IMR-90 (cell line): ENCODE measurements at regions of chr1 and their contacts with region 1.

Region 1: DNA sequence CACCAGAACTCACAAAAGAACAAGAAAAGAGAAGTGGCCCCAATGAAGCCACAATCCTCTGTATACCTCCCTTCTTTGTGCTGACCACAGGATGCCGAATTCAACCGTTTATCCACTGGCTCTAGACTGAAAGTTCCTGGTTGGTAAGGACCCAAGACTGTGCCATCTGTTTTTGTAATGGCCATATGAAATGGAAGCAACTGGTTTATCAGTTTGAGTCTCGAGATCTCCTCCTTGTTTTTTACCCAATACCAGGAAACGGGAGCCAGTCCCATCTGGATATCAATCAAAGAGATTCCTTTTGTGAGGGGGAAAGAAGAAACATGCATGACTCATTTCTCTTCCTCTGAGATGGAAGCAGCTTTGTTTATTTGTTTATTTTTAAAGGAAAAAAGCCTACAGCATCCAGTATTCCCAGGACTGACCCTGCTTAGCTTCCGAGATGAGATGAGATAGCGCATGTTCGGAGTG is 32.4 kb upstream of the ZNF124 start:
- DNase-seq: no peak
- ATAC-seq: no peak
- H3K4me3 ChIP-seq: no peak overlapping the region
- H3K27ac ChIP-seq: no peak overlapping the region
- H3K4me1 ChIP-seq: peaks cover under 1% of the 10 kb centered on the region
- H3K27me3 ChIP-seq: no peaks in the 10 kb centered on the region
- CTCF ChIP-seq: no peak
- POLR2A ChIP-seq: no peak
- RAD21 ChIP-seq: no peak

Region 2: DNA sequence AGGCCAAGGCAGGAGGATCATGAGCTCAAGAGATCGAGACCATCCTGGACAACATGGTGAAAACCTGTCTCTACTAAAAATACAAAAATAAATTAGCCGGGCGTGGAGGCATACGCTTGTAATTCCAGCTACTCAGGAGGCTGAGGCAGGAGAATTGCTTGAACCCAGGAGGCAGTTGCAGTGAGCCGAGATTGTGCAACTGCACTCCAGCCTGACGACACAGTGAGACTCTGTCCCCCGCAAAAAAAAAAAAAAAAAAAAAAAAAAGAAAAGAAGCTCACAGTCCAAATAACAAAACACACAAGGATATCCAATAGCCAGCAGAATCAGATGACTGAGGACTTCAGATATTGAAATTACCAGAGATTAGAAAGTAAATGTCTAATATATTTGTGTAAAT is 284.3 kb before region 1 on chr1:
- CTCF ChIA-PET with region 1: no interaction called
- POLR2A ChIA-PET with region 1: no interaction called
- dilution Hi-C with region 1: no loop called
- in situ Hi-C with region 1: no loop called
- intact Hi-C with region 1: loop called (anchors 5 kb)
- DNase-seq: no peak
- ATAC-seq: no peak
- H3K4me3 ChIP-seq: no peak overlapping the region
- H3K27ac ChIP-seq: no peak overlapping the region
- H3K4me1 ChIP-seq: peaks cover 6% of the 10 kb centered on the region; the same call in 1 of the 2 replicates
- H3K27me3 ChIP-seq: no peaks in the 10 kb centered on the region
- CTCF ChIP-seq: no peak
- POLR2A ChIP-seq: no peak
- RAD21 ChIP-seq: no peak

Region 3: GRCh38 chr1:246959944-246960693 is 244.1 kb before region 1 on chr1:
- CTCF ChIA-PET with region 1: no interaction called
- POLR2A ChIA-PET with region 1: no interaction called
- dilution Hi-C with region 1: no loop called
- in situ Hi-C with region 1: no loop called
- intact Hi-C with region 1: no loop called
- DNase-seq: no peak
- ATAC-seq: no peak
- H3K4me3 ChIP-seq: no peak overlapping the region
- H3K27ac ChIP-seq: no peak overlapping the region
- H3K4me1 ChIP-seq: no peaks in the 10 kb centered on the region
- H3K27me3 ChIP-seq: no peaks in the 10 kb centered on the region
- CTCF ChIP-seq: no peak
- POLR2A ChIP-seq: no peak
- RAD21 ChIP-seq: no peak

Region 4: DNA sequence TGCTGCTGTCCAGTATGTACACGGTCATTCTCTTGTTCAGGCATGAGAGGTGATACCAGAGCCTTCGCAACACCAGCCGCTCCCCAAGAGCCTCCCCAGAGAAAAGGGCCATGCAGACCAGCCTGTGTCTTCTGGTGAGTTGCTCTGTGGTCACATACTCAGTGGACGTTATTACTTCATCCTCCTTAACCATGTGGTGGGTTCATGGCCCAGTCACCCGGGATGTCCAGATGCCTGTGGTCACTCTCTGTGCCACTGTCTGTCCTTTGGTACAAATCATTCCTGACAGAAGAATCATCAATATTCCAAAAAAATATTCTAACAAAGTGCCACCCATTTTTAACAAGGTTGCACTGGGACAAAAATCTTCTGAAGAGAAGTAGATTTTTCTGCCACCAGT is 23.6 kb before region 1 on chr1:
- CTCF ChIA-PET with region 1: no interaction called
- POLR2A ChIA-PET with region 1: no interaction called
- dilution Hi-C with region 1: no loop called
- in situ Hi-C with region 1: no loop called
- intact Hi-C with region 1: no loop called
- DNase-seq: no peak
- ATAC-seq: no peak
- H3K4me3 ChIP-seq: no peak overlapping the region
- H3K27ac ChIP-seq: no peak overlapping the region
- H3K4me1 ChIP-seq: no peaks in the 10 kb centered on the region
- H3K27me3 ChIP-seq: no peaks in the 10 kb centered on the region
- CTCF ChIP-seq: no peak
- POLR2A ChIP-seq: no peak
- RAD21 ChIP-seq: no peak

Region 5: GRCh38 chr1:247431643-247432042 is 227.4 kb after region 1 on chr1:
- CTCF ChIA-PET with region 1: no interaction called
- POLR2A ChIA-PET with region 1: no interaction called
- dilution Hi-C with region 1: no loop called
- in situ Hi-C with region 1: no loop called
- intact Hi-C with region 1: no loop called
- DNase-seq: no peak
- ATAC-seq: no peak
- H3K4me3 ChIP-seq: no peak overlapping the region
- H3K27ac ChIP-seq: no peak overlapping the region
- H3K4me1 ChIP-seq: no peaks in the 10 kb centered on the region
- H3K27me3 ChIP-seq: no peaks in the 10 kb centered on the region
- CTCF ChIP-seq: no peak
- POLR2A ChIP-seq: no peak
- RAD21 ChIP-seq: no peak